AG04450 (cell line): ENCODE measurements at regions of chr12 and their contacts with region 1.

Region 1: GRCh38 chr12:112828541-112828940 is 37.0 kb downstream of the RPH3A start:
- DNase-seq: no peak
- H3K4me3 ChIP-seq: no peak overlapping the region
- H3K27ac ChIP-seq: no peak overlapping the region
- H3K27me3 ChIP-seq: no peaks in the 10 kb centered on the region
- CTCF ChIP-seq: no peak

Region 2: GRCh38 chr12:112705037-112705661 is 123.4 kb before region 1 on chr12:
- CTCF ChIA-PET with region 1: no interaction called
- POLR2A ChIA-PET with region 1: no interaction called
- DNase-seq: no peak
- H3K4me3 ChIP-seq: no peak overlapping the region
- H3K27ac ChIP-seq: no peak overlapping the region
- H3K27me3 ChIP-seq: no peaks in the 10 kb centered on the region
- CTCF ChIP-seq: no peak

Region 3: DNA sequence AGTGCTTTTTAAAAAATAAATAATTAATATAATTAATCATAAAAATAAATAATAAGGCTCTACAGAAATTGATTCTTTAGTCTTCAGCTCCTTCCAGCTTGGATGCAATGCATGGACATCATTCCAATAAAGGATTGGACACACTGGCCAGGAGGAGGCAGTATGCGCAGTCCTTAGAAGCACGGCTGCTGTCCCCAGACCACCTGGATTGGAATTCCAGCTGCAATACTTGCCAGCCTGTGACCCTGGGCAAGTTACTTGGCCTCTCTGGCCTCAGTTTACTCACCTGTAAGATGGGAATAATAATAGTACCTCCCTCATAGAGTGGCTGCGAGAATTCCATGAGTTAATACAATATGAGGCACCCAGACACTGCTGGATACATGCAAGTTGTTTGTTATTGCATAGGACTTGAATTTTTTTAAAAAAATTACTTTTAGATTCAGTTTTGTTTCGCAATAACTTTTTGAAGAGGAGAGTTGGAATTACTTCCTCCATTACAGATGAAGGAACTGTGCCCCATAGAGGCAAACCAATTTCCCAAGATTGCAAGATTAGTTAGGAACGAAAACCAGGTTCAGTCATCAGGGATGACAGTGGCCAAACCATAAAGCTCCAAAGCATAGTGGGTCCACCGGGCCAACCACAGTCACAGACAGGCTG is 24.8 kb before region 1 on chr12:
- CTCF ChIA-PET with region 1: no interaction called
- POLR2A ChIA-PET with region 1: no interaction called
- DNase-seq: no peak
- H3K4me3 ChIP-seq: no peak overlapping the region
- H3K27ac ChIP-seq: no peak overlapping the region
- H3K27me3 ChIP-seq: no peaks in the 10 kb centered on the region
- CTCF ChIP-seq: no peak

Region 4: DNA sequence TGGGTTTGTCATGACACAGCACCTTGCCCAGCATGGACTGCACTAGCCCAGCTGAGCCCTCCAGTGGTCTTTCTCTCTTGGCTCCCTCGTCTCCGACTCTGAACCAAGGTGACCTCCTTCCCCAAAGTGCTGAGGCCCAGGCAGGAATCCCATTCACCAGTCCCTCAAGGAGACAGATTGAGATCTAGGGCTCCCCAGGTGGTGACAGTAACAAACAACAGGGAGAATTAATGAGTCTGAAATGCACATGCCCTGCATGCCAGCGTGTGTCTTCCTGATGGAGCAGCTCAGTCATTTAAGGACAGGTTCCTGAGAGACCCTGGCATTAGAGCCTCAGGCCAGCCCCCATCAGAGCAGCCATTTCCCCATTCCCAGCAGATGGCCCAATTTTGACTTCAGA is 26.8 kb after region 1 on chr12:
- CTCF ChIA-PET with region 1: no interaction called
- POLR2A ChIA-PET with region 1: no interaction called
- DNase-seq: no peak
- H3K4me3 ChIP-seq: no peak overlapping the region
- H3K27ac ChIP-seq: no peak overlapping the region
- H3K27me3 ChIP-seq: peaks cover 3% of the 10 kb centered on the region
- CTCF ChIP-seq: no peak

Region 5: GRCh38 chr12:112906712-112907414 is 78.3 kb after region 1 on chr12 and contains the start of gene OAS1:
- CTCF ChIA-PET with region 1: no interaction called
- POLR2A ChIA-PET with region 1: no interaction called
- DNase-seq: no peak
- H3K4me3 ChIP-seq: peak within 1 kb of the TSS; percentile 14
- H3K27ac ChIP-seq: no peak within 1 kb of the TSS
- H3K27me3 ChIP-seq: no peaks in the 10 kb centered on the region
- CTCF ChIP-seq: no peak
- polyA plus RNA-seq, gene OAS1: 0.19 and 0.50 TPM in 2 replicates

Region 6: DNA sequence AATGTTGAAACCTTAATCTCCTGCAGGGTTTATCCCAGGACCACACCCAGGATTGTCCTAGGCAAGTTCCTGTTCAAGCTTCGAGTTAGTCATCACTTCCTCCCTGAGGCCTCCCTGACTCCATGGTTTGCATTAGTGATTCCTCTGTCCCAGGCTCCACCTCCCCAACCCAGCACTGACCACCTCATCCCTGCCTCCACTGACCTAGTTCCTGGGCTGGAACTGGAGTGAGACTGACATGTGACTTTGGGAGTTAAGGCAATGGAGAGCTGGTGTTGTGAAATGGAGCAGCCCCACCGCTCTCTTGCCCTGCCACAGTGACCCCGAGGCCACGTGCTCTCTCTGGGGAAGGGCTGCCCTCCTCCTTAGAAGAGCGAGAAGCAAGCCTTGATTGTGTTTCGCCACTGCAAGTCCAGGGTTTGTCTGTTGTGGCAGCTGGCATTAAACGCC is 212.2 kb after region 1 on chr12:
- CTCF ChIA-PET with region 1: interaction called, 10 read pairs
- POLR2A ChIA-PET with region 1: no interaction called
- DNase-seq: no peak
- H3K4me3 ChIP-seq: no peak overlapping the region
- H3K27ac ChIP-seq: no peak overlapping the region
- H3K27me3 ChIP-seq: peaks cover 8% of the 10 kb centered on the region
- CTCF ChIP-seq: no peak